Calu3 (cell line): ENCODE measurements at regions of chr15 and their contacts with region 1.

Region 1: GRCh38 chr15:49421991-49422390 is 1.1 kb upstream of the FGF7 start:
- DNase-seq: peak; percentile 55
- H3K4me3 Mint-ChIP-seq: peak overlapping the region; percentile 22
- H3K27ac Mint-ChIP-seq: peak overlapping the region; percentile 7
- H3K4me1 Mint-ChIP-seq: no peaks in the 10 kb centered on the region
- H3K27me3 Mint-ChIP-seq: no peaks in the 10 kb centered on the region
- CTCF ChIP-seq: peak; percentile 67

Region 2: GRCh38 chr15:48352474-48353072 is 1069.4 kb before region 1 on chr15:
- CTCF ChIA-PET with region 1: no interaction called
- intact Hi-C with region 1: loop called (anchors 10 kb)
- DNase-seq: peak; percentile 67
- H3K4me3 Mint-ChIP-seq: no peak overlapping the region
- H3K27ac Mint-ChIP-seq: no peak overlapping the region
- H3K4me1 Mint-ChIP-seq: peaks cover 17% of the 10 kb centered on the region
- H3K27me3 Mint-ChIP-seq: no peaks in the 10 kb centered on the region
- CTCF ChIP-seq: peak; percentile 31

Region 3: GRCh38 chr15:49055630-49056029 is 366.4 kb before region 1 on chr15:
- CTCF ChIA-PET with region 1: no interaction called
- intact Hi-C with region 1: no loop called
- DNase-seq: no peak
- H3K4me3 Mint-ChIP-seq: no peak overlapping the region
- H3K27ac Mint-ChIP-seq: no peak overlapping the region
- H3K4me1 Mint-ChIP-seq: no peaks in the 10 kb centered on the region
- H3K27me3 Mint-ChIP-seq: no peaks in the 10 kb centered on the region
- CTCF ChIP-seq: no peak

Region 4: GRCh38 chr15:49235446-49236124 is 186.4 kb before region 1 on chr15:
- CTCF ChIA-PET with region 1: interaction called, 14 read pairs
- intact Hi-C with region 1: loop called (anchors 1 kb)
- DNase-seq: peak; percentile 36
- H3K4me3 Mint-ChIP-seq: no peak overlapping the region
- H3K27ac Mint-ChIP-seq: no peak overlapping the region
- H3K4me1 Mint-ChIP-seq: peaks cover 13% of the 10 kb centered on the region
- H3K27me3 Mint-ChIP-seq: no peaks in the 10 kb centered on the region
- CTCF ChIP-seq: peak; percentile 35

Region 5: DNA sequence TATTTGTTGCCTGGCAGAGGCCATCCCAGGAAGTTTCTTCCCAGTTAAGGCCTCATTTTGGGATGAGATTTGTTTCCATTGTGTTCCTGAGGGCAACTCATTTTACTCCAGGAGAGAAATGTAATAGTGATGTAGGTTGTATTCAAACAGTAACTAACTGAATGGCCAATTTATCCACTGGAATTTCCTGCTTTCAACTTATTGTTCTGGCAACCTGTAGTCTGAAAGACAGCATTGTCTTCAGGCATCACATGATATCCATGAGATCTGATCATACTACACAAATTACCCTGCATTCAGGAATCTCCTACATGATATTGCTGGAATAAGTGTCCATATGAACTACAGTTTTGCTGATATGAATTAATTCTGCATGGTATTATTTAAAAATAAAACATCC is 78.4 kb before region 1 on chr15:
- CTCF ChIA-PET with region 1: no interaction called
- intact Hi-C with region 1: no loop called
- DNase-seq: no peak
- H3K4me3 Mint-ChIP-seq: no peak overlapping the region
- H3K27ac Mint-ChIP-seq: peak overlapping the region; percentile 64
- H3K4me1 Mint-ChIP-seq: no peaks in the 10 kb centered on the region
- H3K27me3 Mint-ChIP-seq: no peaks in the 10 kb centered on the region
- CTCF ChIP-seq: no peak